Common myeloid progenitor, CD34-positive (primary cell): ENCODE measurements at regions of chr5 and their contacts with region 1.

Region 1: GRCh38 chr5:36414869-36415282 is 113.2 kb upstream of the RANBP3L start:
- DNase-seq: peak; percentile 51 to 64 (median 58)
- H3K4me3 ChIP-seq: no peak overlapping the region
- H3K27ac ChIP-seq: no peak overlapping the region
- H3K4me1 ChIP-seq: peaks cover 0 to 9% (median 6%) of the 10 kb centered on the region in 4 experiments
- H3K27me3 ChIP-seq: no peaks in the 10 kb centered on the region

Region 2: GRCh38 chr5:36403632-36404311 is 11.1 kb before region 1 on chr5:
- CTCF ChIA-PET with region 1: interaction called, 38 read pairs
- POLR2A ChIA-PET with region 1: no interaction called
- DNase-seq: peak; percentile 87 to 97 (median 96)
- H3K4me3 ChIP-seq: peak overlapping the region in 1 of 7 experiments; percentile 15
- H3K27ac ChIP-seq: no peak overlapping the region
- H3K4me1 ChIP-seq: peaks cover 0 to 51% (median 8%) of the 10 kb centered on the region in 4 experiments
- H3K27me3 ChIP-seq: no peaks in the 10 kb centered on the region

Region 3: DNA sequence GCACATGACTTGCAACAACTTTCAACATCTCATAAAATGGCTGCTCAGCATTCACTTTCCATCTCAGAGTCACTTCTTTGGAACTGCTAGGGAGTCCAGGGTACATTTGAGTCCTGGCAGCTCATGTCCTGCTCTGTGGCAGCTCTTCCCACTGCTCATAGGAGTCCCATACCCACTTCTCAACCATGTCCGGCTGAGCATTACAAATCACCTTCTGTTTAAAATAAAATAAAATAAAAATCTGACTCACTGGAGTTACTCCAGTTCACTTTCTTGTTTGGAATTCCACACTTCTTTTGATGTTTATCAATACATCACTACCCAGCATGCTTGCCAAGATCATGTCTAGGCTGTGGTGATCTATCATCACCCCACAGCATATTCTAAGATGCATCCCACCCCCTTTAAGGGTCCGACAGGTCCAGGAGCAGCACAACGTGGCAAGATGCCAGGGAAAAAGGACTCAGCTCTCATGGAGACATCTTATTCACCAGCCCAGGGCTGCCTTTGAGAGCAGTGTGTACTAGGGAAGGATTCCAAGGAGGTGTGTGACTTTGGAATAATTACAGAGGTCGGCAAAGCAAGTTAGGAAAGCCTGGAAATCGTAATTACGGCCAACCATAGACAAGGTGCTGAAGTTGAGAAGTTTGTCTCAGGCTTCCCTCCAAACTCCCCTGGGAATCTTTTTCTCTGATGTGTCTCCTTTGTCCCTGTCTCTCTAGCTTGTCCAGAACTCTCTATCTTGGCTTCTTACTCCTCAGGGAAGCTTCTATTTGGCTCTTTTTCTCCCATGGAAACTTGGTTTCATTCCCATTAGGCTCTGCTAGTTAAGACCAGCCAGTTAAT is 80.1 kb after region 1 on chr5:
- CTCF ChIA-PET with region 1: interaction called, 17 read pairs
- POLR2A ChIA-PET with region 1: no interaction called
- DNase-seq: no peak
- H3K4me3 ChIP-seq: no peak overlapping the region
- H3K27ac ChIP-seq: no peak overlapping the region
- H3K4me1 ChIP-seq: no peaks in the 10 kb centered on the region
- H3K27me3 ChIP-seq: no peaks in the 10 kb centered on the region

Region 4: GRCh38 chr5:36507332-36507952 is 92.6 kb after region 1 on chr5:
- CTCF ChIA-PET with region 1: interaction called, 132 read pairs
- POLR2A ChIA-PET with region 1: no interaction called
- DNase-seq: peak; percentile 67 to 82 (median 76)
- H3K4me3 ChIP-seq: no peak overlapping the region
- H3K27ac ChIP-seq: no peak overlapping the region
- H3K4me1 ChIP-seq: no peaks in the 10 kb centered on the region
- H3K27me3 ChIP-seq: no peaks in the 10 kb centered on the region